ENCODE measurements at regions of chr14 and their contacts with region 1.

Region 1: GRCh38 chr14:73825551-73826188 is 26.0 kb upstream of the PTGR2 start:
- DNase-seq: peak; percentile 95
- H3K4me3 ChIP-seq: no peak overlapping the region
- H3K27ac ChIP-seq: no peak overlapping the region
- H3K4me1 ChIP-seq: peaks cover 6% of the 10 kb centered on the region; the same call in 1 of the 2 replicates
- H3K27me3 ChIP-seq: no peaks in the 10 kb centered on the region

Region 2: DNA sequence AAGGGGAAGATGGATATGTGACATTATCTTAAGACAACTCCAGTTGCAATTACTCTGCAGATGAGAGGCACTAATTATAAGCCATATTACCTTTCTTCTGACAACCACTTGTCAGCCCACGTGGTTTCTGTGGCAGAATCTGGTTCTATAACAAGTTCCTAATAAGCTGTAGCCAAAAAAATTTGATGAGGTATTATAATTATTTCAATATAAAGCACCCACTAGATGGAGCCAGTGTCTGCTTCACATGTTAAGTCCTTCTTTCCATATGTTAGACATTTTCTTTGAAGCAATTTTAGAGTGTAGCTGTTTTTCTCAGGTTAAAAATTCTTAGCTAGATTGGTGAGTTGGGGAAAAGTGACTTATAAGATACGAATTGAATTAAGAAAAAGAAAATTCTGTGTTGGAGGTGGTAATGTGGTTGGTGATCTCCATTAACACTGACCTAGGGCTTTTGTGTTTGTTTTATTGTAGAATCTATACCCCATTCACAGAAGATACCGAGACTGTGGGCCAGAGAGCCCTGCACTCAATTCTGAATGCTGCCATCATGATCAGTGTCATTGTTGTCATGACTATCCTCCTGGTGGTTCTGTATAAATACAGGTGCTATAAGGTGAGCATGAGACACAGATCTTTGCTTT is 652.5 kb before region 1 on chr14:
- in situ Hi-C with region 1: no loop called
- DNase-seq: peak; percentile 70
- H3K4me3 ChIP-seq: no peak overlapping the region
- H3K27ac ChIP-seq: no peak overlapping the region
- H3K4me1 ChIP-seq: no peaks in the 10 kb centered on the region
- H3K27me3 ChIP-seq: no peaks in the 10 kb centered on the region

Region 3: DNA sequence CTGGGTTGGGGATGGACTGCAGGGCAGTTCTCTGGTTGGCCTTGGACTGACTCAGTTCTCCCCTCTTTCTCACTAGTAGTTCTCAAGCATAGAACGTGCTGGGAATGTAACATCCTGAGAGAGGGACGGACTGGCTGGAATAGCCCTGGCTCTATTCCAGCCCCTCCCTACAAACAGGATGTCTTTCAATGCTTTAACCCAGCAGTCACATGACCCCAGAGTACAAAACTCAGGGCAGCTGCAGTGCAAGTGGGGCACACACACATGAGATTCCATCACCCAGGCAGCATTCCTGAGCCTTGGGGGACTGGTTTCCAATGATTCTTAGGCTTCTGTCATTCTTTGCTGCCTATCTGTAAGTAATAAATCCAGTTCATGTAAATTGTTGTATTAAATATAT is 215.0 kb before region 1 on chr14:
- in situ Hi-C with region 1: no loop called
- DNase-seq: peak; percentile 6
- H3K4me3 ChIP-seq: no peak overlapping the region
- H3K27ac ChIP-seq: no peak overlapping the region
- H3K4me1 ChIP-seq: no peaks in the 10 kb centered on the region
- H3K27me3 ChIP-seq: no peaks in the 10 kb centered on the region

Region 4: DNA sequence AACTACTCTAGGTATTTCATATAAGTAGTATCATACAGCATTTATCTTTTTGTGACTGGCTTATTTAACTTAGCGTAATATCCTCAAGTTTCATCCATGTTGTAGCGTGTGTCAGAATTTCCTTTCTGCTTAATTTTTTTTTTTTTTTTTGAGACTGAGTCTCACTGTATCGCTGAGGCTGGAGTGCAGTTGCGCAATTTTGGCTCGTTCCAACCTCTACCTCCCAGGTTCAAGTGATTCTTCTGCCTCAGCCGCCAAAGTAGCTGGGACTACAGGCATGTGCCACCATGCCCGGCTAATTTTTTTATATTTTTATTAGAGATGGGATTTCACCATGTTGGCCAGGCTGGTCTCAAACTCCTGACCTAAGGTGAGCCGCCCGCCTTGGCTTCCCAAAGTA is 140.3 kb before region 1 on chr14:
- in situ Hi-C with region 1: no loop called
- DNase-seq: no peak
- H3K4me3 ChIP-seq: no peak overlapping the region
- H3K27ac ChIP-seq: no peak overlapping the region
- H3K4me1 ChIP-seq: no peaks in the 10 kb centered on the region
- H3K27me3 ChIP-seq: no peaks in the 10 kb centered on the region

Region 5: GRCh38 chr14:73731111-73731510 is 94.6 kb before region 1 on chr14:
- in situ Hi-C with region 1: loop called (anchors 10 kb)
- DNase-seq: no peak
- H3K4me3 ChIP-seq: no peak overlapping the region
- H3K27ac ChIP-seq: no peak overlapping the region
- H3K4me1 ChIP-seq: peaks cover 13% of the 10 kb centered on the region
- H3K27me3 ChIP-seq: no peaks in the 10 kb centered on the region

Measured in GM23248 (cell line).